ENCODE measurements at regions of chr5 and their contacts with region 1.

Region 1: GRCh38 chr5:54310433-54311175 is at the start of gene ARL15:
- DNase-seq: peak; percentile 99
- ATAC-seq: peak; percentile 98
- H3K4me3 Mint-ChIP-seq: peak within 1 kb of the TSS; percentile 83
- H3K27ac Mint-ChIP-seq: peak within 1 kb of the TSS; percentile 81
- H3K4me1 Mint-ChIP-seq: peaks cover 27% of the 10 kb centered on the region
- H3K27me3 Mint-ChIP-seq: peaks cover 8% of the 10 kb centered on the region
- total RNA-seq, gene ARL15: 5.4 to 6.7 TPM

Region 2: DNA sequence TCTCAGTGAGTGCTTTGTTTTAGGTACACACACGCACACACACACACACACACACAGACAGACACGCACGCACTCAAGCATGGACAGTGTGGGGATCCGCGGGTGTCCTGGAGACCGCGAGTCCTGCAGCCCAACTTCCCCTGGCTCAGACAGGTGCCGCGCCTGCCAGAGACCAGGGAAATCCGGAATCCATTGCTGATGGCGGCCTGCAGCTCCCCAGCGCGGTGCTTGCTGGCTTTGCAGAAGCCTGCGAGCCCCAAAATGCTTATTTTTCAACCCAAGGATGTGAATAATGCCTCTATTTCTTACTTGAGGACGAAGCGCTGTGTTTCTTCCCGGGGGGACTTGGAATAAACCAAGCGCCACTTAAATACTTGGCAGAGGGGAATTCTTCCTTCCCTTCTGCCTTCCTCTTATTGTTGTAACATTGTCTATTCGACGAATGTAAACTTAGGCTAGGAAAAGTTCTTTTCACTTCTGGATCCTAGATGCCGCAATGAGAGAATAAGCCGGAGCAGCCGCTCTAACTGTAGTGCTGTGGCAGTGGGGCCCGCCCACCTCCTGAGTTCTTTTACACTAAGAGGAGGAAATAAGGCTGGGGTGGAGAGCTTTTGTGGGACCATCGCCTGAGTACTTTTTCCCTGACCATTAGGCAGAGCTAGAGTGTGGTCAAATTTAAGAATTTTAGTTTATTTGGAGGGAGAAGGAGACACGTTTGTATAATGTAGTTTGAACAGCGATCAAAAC is 1320.7 kb before region 1 on chr5:
- CTCF ChIA-PET with region 1: no interaction called
- POLR2A ChIA-PET with region 1: no interaction called
- intact Hi-C with region 1: loop called in 1 of 2 experiments (anchors 2 kb)
- DNase-seq: peak; percentile 62
- ATAC-seq: peak; percentile 50
- H3K4me3 Mint-ChIP-seq: peak overlapping the region; percentile 65
- H3K27ac Mint-ChIP-seq: no peak overlapping the region
- H3K4me1 Mint-ChIP-seq: peaks cover 16% of the 10 kb centered on the region
- H3K27me3 Mint-ChIP-seq: peaks cover 42% of the 10 kb centered on the region

Region 3: GRCh38 chr5:53560506-53561191 is 750.0 kb before region 1 on chr5 and contains the start of gene NDUFS4:
- CTCF ChIA-PET with region 1: no interaction called
- POLR2A ChIA-PET with region 1: no interaction called
- intact Hi-C with region 1: loop called in 1 of 2 experiments (anchors 2 kb)
- DNase-seq: peak; percentile 92
- ATAC-seq: peak; percentile 91
- H3K4me3 Mint-ChIP-seq: peak within 1 kb of the TSS; percentile 84
- H3K27ac Mint-ChIP-seq: peak within 1 kb of the TSS; percentile 92
- H3K4me1 Mint-ChIP-seq: peaks cover 25% of the 10 kb centered on the region
- H3K27me3 Mint-ChIP-seq: peaks cover 20% of the 10 kb centered on the region
- total RNA-seq, gene NDUFS4: 52.2 to 69.1 TPM

Region 4: GRCh38 chr5:54109626-54110330 is 200.8 kb before region 1 on chr5:
- CTCF ChIA-PET with region 1: no interaction called
- POLR2A ChIA-PET with region 1: no interaction called
- intact Hi-C with region 1: no loop called
- DNase-seq: no peak
- ATAC-seq: no peak
- H3K4me3 Mint-ChIP-seq: no peak overlapping the region
- H3K27ac Mint-ChIP-seq: no peak overlapping the region
- H3K4me1 Mint-ChIP-seq: no peaks in the 10 kb centered on the region
- H3K27me3 Mint-ChIP-seq: no peaks in the 10 kb centered on the region

Region 5: DNA sequence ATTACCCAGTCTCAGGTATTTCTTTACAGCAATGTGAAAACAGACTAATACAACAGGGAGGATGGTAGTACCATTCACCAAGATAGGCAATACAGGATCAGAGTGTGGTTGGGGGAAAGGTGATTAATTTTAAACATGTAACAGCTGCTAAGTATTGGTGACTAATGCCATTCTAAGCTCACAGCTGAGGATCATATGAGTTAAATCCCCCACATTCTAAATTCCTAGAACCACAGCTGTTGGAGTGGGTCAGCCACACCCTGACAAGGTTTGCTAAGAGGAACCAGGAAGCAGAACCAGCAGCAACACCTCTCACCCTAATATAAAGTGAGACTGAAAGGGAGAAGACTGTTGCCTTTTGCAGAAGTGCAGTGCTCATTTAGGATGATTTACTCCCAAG is 169.7 kb after region 1 on chr5:
- CTCF ChIA-PET with region 1: no interaction called
- POLR2A ChIA-PET with region 1: no interaction called
- intact Hi-C with region 1: loop called in 1 of 2 experiments (anchors 5 kb)
- DNase-seq: no peak
- ATAC-seq: no peak
- H3K4me3 Mint-ChIP-seq: no peak overlapping the region
- H3K27ac Mint-ChIP-seq: no peak overlapping the region
- H3K4me1 Mint-ChIP-seq: no peaks in the 10 kb centered on the region
- H3K27me3 Mint-ChIP-seq: peaks cover 8% of the 10 kb centered on the region

Region 6: DNA sequence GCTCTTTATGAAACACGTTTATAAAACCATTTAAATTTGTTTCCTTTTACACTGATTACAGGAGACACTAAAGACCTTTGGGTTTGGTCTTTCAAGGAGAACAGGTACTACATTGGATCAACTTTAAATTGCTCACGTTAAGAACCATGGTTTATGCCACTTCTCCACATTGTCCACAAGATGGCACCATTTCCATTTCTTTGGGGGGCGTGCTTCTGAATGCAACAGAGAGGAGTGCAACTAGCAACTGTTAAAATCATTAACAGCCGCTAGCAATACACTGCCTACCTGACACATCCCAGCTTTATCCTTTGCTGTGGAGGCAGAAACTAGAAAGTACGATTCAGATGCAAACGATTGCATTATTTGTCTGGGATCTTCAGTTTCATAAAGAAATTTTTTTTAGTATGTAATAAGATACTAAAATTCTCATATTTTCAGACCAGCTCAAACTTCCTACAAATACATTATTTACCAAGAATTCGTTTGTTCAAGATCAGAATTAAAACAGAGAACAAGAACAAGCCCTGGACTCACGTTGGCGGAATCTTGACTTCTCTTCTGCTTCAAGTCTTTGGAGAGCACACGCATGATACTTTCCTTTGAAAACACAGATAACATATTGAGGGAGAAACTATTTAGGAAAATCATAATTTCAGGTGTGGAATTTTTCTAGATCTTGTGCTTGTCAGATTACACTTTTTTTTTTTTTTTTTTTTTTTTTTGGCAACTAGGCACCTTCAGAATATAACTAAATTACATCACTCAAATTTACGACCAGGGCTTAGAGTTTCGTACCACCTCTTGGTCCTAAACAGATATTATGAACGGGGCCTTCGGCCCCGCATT is 861.7 kb after region 1 on chr5:
- CTCF ChIA-PET with region 1: no interaction called
- POLR2A ChIA-PET with region 1: no interaction called
- intact Hi-C with region 1: loop called in 1 of 2 experiments (anchors 1 kb)
- DNase-seq: peak; percentile 73
- ATAC-seq: peak; percentile 71
- H3K4me3 Mint-ChIP-seq: peak overlapping the region; percentile 75
- H3K27ac Mint-ChIP-seq: no peak overlapping the region
- H3K4me1 Mint-ChIP-seq: peaks cover 37% of the 10 kb centered on the region
- H3K27me3 Mint-ChIP-seq: peaks cover 58% of the 10 kb centered on the region

Measured in activated CD4-positive, alpha-beta T cell treated with anti-CD3 and anti-CD28 coated beads for 36 hours (primary cell).